Heart left ventricle (tissue), 16 donors: ENCODE measurements at regions of chr5 and their contacts with region 1.

Region 1: GRCh38 chr5:35089334-35090314 is 41.9 kb upstream of the AGXT2 start:
- DNase-seq: peak in 3 of 5 donors; percentile 15 to 29 (median 24)
- ATAC-seq: peak in 1 of 4 donors; percentile 7
- H3K4me3 ChIP-seq: no peak overlapping the region
- H3K27ac ChIP-seq: no peak overlapping the region
- H3K4me1 ChIP-seq: no peaks in the 10 kb centered on the region
- H3K27me3 ChIP-seq: no peaks in the 10 kb centered on the region
- CTCF ChIP-seq: peak; percentile 42 to 72 (median 58)
- POLR2A ChIP-seq: no peak

Region 2: GRCh38 chr5:34977934-34978613 is 111.5 kb before region 1 on chr5:
- intact Hi-C with region 1: no loop called
- DNase-seq: no peak
- ATAC-seq: no peak
- H3K4me3 ChIP-seq: no peak overlapping the region
- H3K27ac ChIP-seq: no peak overlapping the region
- H3K4me1 ChIP-seq: no peaks in the 10 kb centered on the region
- H3K27me3 ChIP-seq: no peaks in the 10 kb centered on the region
- CTCF ChIP-seq: no peak
- POLR2A ChIP-seq: no peak

Region 3: GRCh38 chr5:35182541-35183535 is 93.2 kb after region 1 on chr5:
- intact Hi-C with region 1: loop called in 3 of 10 experiments (anchors 5 to 10 kb)
- DNase-seq: peak in 1 of 5 donors; percentile 35
- ATAC-seq: peak in 1 of 4 donors; percentile 52
- H3K4me3 ChIP-seq: no peak overlapping the region
- H3K27ac ChIP-seq: no peak overlapping the region
- H3K4me1 ChIP-seq: no peaks in the 10 kb centered on the region
- H3K27me3 ChIP-seq: peaks cover 0 to 4% (median 0%) of the 10 kb centered on the region in 9 donors
- CTCF ChIP-seq: peak in 10 of 12 donors; percentile 8 to 59 (median 40)
- POLR2A ChIP-seq: no peak